ENCODE measurements at regions of chr21 and their contacts with region 1.

Region 1: DNA sequence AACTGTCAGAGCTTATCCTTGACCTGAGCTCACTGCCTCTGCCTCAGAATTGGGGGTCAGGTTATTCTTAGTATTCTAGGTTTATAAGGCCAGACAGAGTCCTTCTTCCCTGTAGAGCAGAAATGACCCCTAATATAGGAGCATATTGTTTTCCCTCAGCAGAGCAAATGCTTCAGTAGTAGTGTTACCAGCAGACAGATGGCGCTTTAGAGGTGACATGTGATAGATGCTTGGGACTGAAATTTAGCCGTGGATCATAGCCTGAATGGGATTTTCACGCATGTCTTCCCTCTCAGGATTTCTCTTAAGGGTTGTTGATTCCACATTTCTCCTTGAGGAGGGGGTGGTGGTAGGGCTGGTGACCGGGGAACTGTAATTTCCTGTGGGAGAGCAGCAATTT is 24.5 kb downstream of the ADARB1 start:
- DNase-seq: peak; percentile 27
- H3K4me3 Mint-ChIP-seq: no peak overlapping the region
- H3K27ac Mint-ChIP-seq: peak overlapping the region; percentile 9
- H3K4me1 Mint-ChIP-seq: peaks cover 19% of the 10 kb centered on the region
- H3K27me3 Mint-ChIP-seq: no peaks in the 10 kb centered on the region
- CTCF ChIP-seq: peak; percentile 20

Region 2: GRCh38 chr21:44487831-44488230 is 611.0 kb before region 1 on chr21:
- CTCF ChIA-PET with region 1: no interaction called
- POLR2A ChIA-PET with region 1: no interaction called
- intact Hi-C with region 1: loop called (anchors 5 kb)
- DNase-seq: peak; percentile 24
- H3K4me3 Mint-ChIP-seq: no peak overlapping the region
- H3K27ac Mint-ChIP-seq: no peak overlapping the region
- H3K4me1 Mint-ChIP-seq: no peaks in the 10 kb centered on the region
- H3K27me3 Mint-ChIP-seq: no peaks in the 10 kb centered on the region
- CTCF ChIP-seq: peak; percentile 37

Region 3: GRCh38 chr21:44556879-44557278 is 542.0 kb before region 1 on chr21:
- CTCF ChIA-PET with region 1: no interaction called
- POLR2A ChIA-PET with region 1: no interaction called
- intact Hi-C with region 1: no loop called
- DNase-seq: no peak
- H3K4me3 Mint-ChIP-seq: no peak overlapping the region
- H3K27ac Mint-ChIP-seq: no peak overlapping the region
- H3K4me1 Mint-ChIP-seq: no peaks in the 10 kb centered on the region
- H3K27me3 Mint-ChIP-seq: peaks cover 76% of the 10 kb centered on the region
- CTCF ChIP-seq: no peak

Region 4: GRCh38 chr21:45050786-45051489 is 47.9 kb before region 1 on chr21:
- CTCF ChIA-PET with region 1: no interaction called
- POLR2A ChIA-PET with region 1: no interaction called
- intact Hi-C with region 1: no loop called
- DNase-seq: no peak
- H3K4me3 Mint-ChIP-seq: no peak overlapping the region
- H3K27ac Mint-ChIP-seq: no peak overlapping the region
- H3K4me1 Mint-ChIP-seq: no peaks in the 10 kb centered on the region
- H3K27me3 Mint-ChIP-seq: peaks cover 41% of the 10 kb centered on the region
- CTCF ChIP-seq: no peak

Region 5: DNA sequence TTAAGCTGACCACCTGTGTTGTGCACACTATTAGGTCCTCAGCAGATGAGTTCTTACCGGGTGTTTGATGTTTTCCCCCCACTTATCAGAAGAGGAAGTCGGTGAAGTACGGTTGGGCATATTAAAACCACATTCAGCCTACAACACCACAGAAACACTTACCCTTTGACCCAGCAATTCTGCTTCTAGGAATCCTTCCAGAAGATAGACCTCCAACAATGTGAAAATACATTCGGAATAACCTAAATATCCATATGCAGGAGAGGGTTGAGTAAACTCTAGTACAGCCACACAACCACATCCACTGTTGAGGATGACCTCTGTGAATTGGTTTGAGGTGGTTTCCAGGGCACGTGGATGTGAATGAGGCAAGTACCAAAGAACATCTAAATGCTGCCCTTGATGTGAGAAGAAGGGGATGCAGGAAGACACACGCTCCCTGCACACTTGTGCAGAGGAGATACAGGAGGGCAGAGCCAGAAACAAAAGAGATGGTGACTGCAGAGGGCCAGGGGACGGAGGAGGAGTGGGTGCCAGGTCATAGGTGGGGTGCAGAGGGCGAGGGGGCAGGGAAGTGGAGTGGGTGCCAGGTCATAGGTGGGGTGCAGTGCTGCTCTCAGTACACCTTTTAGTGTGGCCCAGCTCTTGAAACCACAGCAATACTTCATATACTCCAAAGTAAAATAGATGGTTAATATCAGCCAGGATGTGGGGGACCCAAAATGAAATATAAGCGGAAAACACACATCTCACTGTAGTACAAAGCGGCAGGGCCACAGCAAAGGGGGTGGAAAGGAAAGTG is 11.6 kb before region 1 on chr21:
- CTCF ChIA-PET with region 1: interaction called, 19 read pairs
- POLR2A ChIA-PET with region 1: interaction called, 5 read pairs
- intact Hi-C with region 1: no loop called
- DNase-seq: no peak
- H3K4me3 Mint-ChIP-seq: no peak overlapping the region
- H3K27ac Mint-ChIP-seq: no peak overlapping the region
- H3K4me1 Mint-ChIP-seq: peaks cover 7% of the 10 kb centered on the region
- H3K27me3 Mint-ChIP-seq: no peaks in the 10 kb centered on the region
- CTCF ChIP-seq: no peak

Measured in MCF 10A (cell line).